CD8-positive, alpha-beta T cell (primary cell): ENCODE measurements at regions of chr7 and their contacts with region 1.

Region 1: GRCh38 chr7:112449902-112450806 is at the start of gene IFRD1:
- DNase-seq: peak; percentile 95 to 100 (median 99)
- ATAC-seq: peak; percentile 81
- H3K4me3 ChIP-seq: peak within 1 kb of the TSS; percentile 99 to 100
- H3K4me3 Mint-ChIP-seq: peak within 1 kb of the TSS; percentile 98
- H3K27ac ChIP-seq: peak within 1 kb of the TSS; percentile 99
- H3K27ac Mint-ChIP-seq: peak within 1 kb of the TSS; percentile 97
- H3K4me1 ChIP-seq: peaks cover 26% of the 10 kb centered on the region
- H3K4me1 Mint-ChIP-seq: peaks cover 42% of the 10 kb centered on the region
- H3K27me3 ChIP-seq: no peaks in the 10 kb centered on the region
- H3K27me3 Mint-ChIP-seq: no peaks in the 10 kb centered on the region
- CTCF ChIP-seq: no peak
- total RNA-seq, gene IFRD1: 292 to 301 TPM

Region 2: DNA sequence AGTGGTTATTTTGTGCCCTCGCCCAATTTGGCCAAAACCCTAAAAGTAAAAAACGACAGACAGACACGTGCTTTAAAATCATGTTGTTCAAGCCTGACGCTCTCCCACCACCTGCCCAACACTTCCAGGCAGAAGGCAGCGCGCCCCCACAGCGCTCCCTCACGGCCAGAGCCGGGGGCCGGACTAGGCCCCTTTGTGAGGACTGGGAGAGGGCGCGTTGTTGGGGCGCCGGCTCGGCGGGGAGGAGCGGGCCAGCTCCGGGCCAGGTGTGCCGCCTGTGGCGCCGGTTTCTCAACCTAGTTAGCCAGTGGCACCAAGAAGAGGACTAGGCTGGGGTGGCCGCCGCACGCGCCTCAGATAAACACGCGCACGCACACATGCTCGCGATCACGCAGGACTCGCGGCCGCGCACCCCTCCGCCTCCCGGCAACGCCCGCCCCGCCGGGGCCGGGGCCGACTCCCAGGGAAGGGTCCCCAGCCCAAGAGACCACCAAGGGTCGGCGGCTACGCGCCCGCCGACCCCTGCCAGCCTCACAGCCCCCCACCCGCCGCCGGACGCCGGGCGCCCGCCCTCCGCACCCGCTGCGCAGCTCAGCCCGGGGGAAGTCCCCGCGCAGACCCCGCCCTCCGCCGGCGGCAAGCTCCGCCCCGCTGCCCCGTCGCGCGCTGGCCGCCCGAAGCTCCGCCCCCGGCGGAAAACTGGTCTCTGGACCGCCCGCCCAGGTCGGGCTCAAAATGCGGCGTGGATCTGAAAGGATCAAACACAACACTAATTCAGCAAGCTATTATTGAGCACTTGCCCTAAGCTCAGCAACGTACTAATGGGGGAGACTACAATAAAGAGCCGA is 888.0 kb before region 1 on chr7 and contains the start of gene IMMP2L:
- CTCF ChIA-PET with region 1: no interaction called
- POLR2A ChIA-PET with region 1: no interaction called
- intact Hi-C with region 1: loop called in 1 of 2 experiments (anchors 5 kb)
- DNase-seq: peak; percentile 82 to 95 (median 90)
- ATAC-seq: peak; percentile 95
- H3K4me3 ChIP-seq: peak within 1 kb of the TSS; percentile 61 to 85
- H3K4me3 Mint-ChIP-seq: peak within 1 kb of the TSS; percentile 92
- H3K27ac ChIP-seq: peak within 1 kb of the TSS; percentile 77 to 82
- H3K27ac Mint-ChIP-seq: peak within 1 kb of the TSS; percentile 96
- H3K4me1 ChIP-seq: peaks cover 18% of the 10 kb centered on the region
- H3K4me1 Mint-ChIP-seq: peaks cover 43% of the 10 kb centered on the region
- H3K27me3 ChIP-seq: no peaks in the 10 kb centered on the region
- H3K27me3 Mint-ChIP-seq: peaks cover 3% of the 10 kb centered on the region
- CTCF ChIP-seq: peak; percentile 15
- total RNA-seq, gene IMMP2L: 9.8 to 12.7 TPM

Region 3: DNA sequence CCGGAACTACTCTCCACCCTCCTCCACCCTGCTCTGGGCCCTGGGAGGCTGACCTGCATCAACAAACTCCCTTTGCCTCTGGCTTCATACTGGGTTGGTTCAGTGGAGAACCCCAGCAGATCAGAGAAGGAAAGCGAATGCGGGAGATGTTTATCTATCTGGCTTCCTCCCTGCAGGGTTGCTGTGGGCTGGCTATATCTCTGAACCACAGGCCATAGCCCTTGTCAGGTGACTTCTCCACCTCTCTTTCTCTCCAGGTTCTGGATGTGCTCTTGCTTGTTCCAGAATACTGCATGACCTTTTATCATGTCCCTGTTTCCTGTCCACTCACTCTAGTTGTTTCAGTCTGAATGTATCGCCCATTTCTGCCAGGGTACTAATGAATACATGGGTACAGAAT is 51.6 kb before region 1 on chr7:
- CTCF ChIA-PET with region 1: no interaction called
- POLR2A ChIA-PET with region 1: no interaction called
- intact Hi-C with region 1: loop called in 1 of 2 experiments (anchors 2 kb)
- DNase-seq: peak in 3 of 9 experiments; percentile 11 to 38 (median 14)
- ATAC-seq: no peak
- H3K4me3 ChIP-seq: no peak overlapping the region
- H3K4me3 Mint-ChIP-seq: no peak overlapping the region
- H3K27ac ChIP-seq: no peak overlapping the region
- H3K27ac Mint-ChIP-seq: no peak overlapping the region
- H3K4me1 ChIP-seq: peaks cover 13% of the 10 kb centered on the region
- H3K4me1 Mint-ChIP-seq: peaks cover 11% of the 10 kb centered on the region
- H3K27me3 ChIP-seq: no peaks in the 10 kb centered on the region
- H3K27me3 Mint-ChIP-seq: peaks cover 4% of the 10 kb centered on the region
- CTCF ChIP-seq: no peak

Region 4: GRCh38 chr7:112462236-112462635 is 12.1 kb after region 1 on chr7:
- CTCF ChIA-PET with region 1: interaction called, 3 read pairs
- POLR2A ChIA-PET with region 1: interaction called, 18 read pairs
- intact Hi-C with region 1: no loop called
- DNase-seq: peak in 1 of 9 experiments; percentile 30
- ATAC-seq: no peak
- H3K4me3 ChIP-seq: no peak overlapping the region
- H3K4me3 Mint-ChIP-seq: no peak overlapping the region
- H3K27ac ChIP-seq: no peak overlapping the region
- H3K27ac Mint-ChIP-seq: no peak overlapping the region
- H3K4me1 ChIP-seq: no peaks in the 10 kb centered on the region
- H3K4me1 Mint-ChIP-seq: peaks cover 8% of the 10 kb centered on the region
- H3K27me3 ChIP-seq: no peaks in the 10 kb centered on the region
- H3K27me3 Mint-ChIP-seq: no peaks in the 10 kb centered on the region
- CTCF ChIP-seq: no peak

Region 5: GRCh38 chr7:112789817-112790585 is 339.8 kb after region 1 on chr7 and contains the start of gene TMEM168:
- CTCF ChIA-PET with region 1: no interaction called
- POLR2A ChIA-PET with region 1: interaction called, 3 read pairs
- intact Hi-C with region 1: loop called (anchors 1 to 2 kb)
- DNase-seq: peak; percentile 71 to 91 (median 88)
- ATAC-seq: peak; percentile 91
- H3K4me3 ChIP-seq: peak within 1 kb of the TSS; percentile 94
- H3K4me3 Mint-ChIP-seq: peak within 1 kb of the TSS; percentile 89
- H3K27ac ChIP-seq: peak within 1 kb of the TSS; percentile 80 to 87
- H3K27ac Mint-ChIP-seq: peak within 1 kb of the TSS; percentile 90
- H3K4me1 ChIP-seq: peaks cover 20% of the 10 kb centered on the region
- H3K4me1 Mint-ChIP-seq: peaks cover 32% of the 10 kb centered on the region
- H3K27me3 ChIP-seq: no peaks in the 10 kb centered on the region
- H3K27me3 Mint-ChIP-seq: no peaks in the 10 kb centered on the region
- CTCF ChIP-seq: no peak
- total RNA-seq, gene TMEM168: 10.5 to 10.7 TPM

Region 6: DNA sequence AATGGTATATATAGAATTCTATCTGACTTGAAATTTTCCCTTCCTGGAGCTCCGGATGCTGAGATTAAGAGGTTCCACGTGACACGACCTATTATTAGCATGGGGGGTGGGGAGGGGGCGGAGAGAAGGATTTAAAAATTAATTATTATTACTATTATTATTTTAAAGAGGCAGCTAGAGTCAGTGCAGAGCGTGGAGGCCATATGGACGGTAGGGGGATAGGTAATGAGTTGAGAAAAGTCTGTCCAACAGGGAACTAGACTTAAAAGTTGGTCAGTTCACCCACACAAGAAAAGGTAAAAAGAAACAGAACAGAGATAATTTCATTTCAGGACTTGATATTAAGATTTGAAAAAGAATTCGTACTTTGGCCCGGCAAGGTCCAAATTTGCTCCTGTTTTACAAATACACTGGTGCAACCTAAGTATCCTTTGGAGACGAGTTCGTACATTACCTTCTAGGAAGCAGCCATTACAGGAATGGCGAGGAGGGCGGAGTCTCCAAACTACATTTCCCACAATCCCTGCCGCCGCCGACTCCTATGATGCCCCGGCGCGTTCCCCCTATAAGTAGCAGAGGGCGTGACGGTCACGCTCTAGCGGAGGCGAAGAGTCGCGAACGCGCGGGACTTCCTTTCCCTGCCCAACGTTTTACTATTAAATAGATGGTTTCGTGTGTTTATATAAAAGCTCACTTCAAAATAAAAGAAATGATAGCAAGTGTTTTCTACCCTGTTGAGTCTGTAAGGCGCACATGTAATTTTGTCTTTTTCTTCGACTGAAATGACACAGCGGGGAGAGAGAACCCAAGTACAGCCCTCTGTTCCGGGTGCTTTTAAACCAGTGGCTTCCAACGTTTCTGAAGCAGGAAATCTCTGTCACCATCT is 668.2 kb after region 1 on chr7 and contains the start of gene SMIM30:
- CTCF ChIA-PET with region 1: no interaction called
- POLR2A ChIA-PET with region 1: interaction called, 3 read pairs
- intact Hi-C with region 1: loop called (anchors 1 to 2 kb)
- DNase-seq: peak; percentile 76 to 93 (median 90)
- ATAC-seq: peak; percentile 100
- H3K4me3 ChIP-seq: peak within 1 kb of the TSS; percentile 58 to 66
- H3K4me3 Mint-ChIP-seq: peak within 1 kb of the TSS; percentile 96
- H3K27ac ChIP-seq: peak within 1 kb of the TSS; percentile 55 to 73
- H3K27ac Mint-ChIP-seq: peak within 1 kb of the TSS; percentile 98
- H3K4me1 ChIP-seq: peaks cover 6% of the 10 kb centered on the region
- H3K4me1 Mint-ChIP-seq: peaks cover 21% of the 10 kb centered on the region
- H3K27me3 ChIP-seq: no peaks in the 10 kb centered on the region
- H3K27me3 Mint-ChIP-seq: no peaks in the 10 kb centered on the region
- CTCF ChIP-seq: no peak
- total RNA-seq, gene SMIM30: 3.5 to 4.8 TPM